Activated naive CD4-positive, alpha-beta T cell treated with anti-CD3 and anti-CD28 coated beads for 36 hours (primary cell): ENCODE measurements at regions of chr3 and their contacts with region 1.

Region 1: GRCh38 chr3:111859974-111860859 is 1.2 kb downstream of the PHLDB2 start:
- DNase-seq: peak; percentile 75
- H3K4me3 Mint-ChIP-seq: peak overlapping the region; percentile 84
- H3K27ac Mint-ChIP-seq: no peak overlapping the region
- H3K4me1 Mint-ChIP-seq: peaks cover 10% of the 10 kb centered on the region
- H3K27me3 Mint-ChIP-seq: peaks cover 45% of the 10 kb centered on the region

Region 2: GRCh38 chr3:111717601-111718000 is 142.6 kb before region 1 on chr3:
- CTCF ChIA-PET with region 1: interaction called, 19 read pairs
- intact Hi-C with region 1: loop called (anchors 1 kb)
- DNase-seq: peak; percentile 83
- H3K4me3 Mint-ChIP-seq: no peak overlapping the region
- H3K27ac Mint-ChIP-seq: no peak overlapping the region
- H3K4me1 Mint-ChIP-seq: no peaks in the 10 kb centered on the region
- H3K27me3 Mint-ChIP-seq: no peaks in the 10 kb centered on the region

Region 3: DNA sequence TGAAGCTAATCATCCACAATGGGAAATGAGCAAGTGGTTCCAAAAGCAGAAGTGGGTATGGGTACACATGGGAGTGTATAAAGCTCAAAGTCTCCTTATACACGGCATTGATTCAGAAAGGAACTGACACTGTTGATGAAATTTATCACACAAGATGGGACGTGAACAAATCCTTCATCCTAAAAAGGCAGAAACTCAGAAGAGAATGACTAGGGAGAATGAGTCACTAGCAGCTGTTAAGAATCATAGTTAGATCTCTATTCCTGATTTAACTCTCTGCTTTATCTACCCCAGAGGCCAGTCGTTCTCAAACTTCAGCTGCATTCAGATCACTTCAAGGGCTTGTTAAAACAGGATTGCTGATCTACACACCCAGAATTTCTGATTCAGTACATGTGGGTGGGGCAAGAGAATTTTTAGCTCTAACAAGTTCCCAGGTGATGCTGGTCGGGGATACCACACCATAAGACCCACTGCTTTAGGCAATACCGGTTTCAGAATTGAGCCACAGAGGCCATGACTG is 98.8 kb before region 1 on chr3:
- CTCF ChIA-PET with region 1: no interaction called
- intact Hi-C with region 1: loop called (anchors 1 kb)
- DNase-seq: peak; percentile 54
- H3K4me3 Mint-ChIP-seq: no peak overlapping the region
- H3K27ac Mint-ChIP-seq: peak overlapping the region; percentile 68
- H3K4me1 Mint-ChIP-seq: peaks cover 18% of the 10 kb centered on the region
- H3K27me3 Mint-ChIP-seq: no peaks in the 10 kb centered on the region